ENCODE measurements at regions of chr11 and their contacts with region 1.

Region 1: GRCh38 chr11:71066325-71066724 is 186.1 kb downstream of the SHANK2 start:
- DNase-seq: no peak
- ATAC-seq: no peak

Region 2: GRCh38 chr11:71097506-71098240 is 31.3 kb after region 1 on chr11:
- intact Hi-C with region 1: loop called (anchors 1 kb)
- DNase-seq: no peak
- ATAC-seq: no peak

Region 3: GRCh38 chr11:71325418-71326327 is 259.3 kb after region 1 on chr11:
- intact Hi-C with region 1: no loop called
- DNase-seq: no peak
- ATAC-seq: no peak